ENCODE measurements at regions of chr3 and their contacts with region 1.

Region 1: DNA sequence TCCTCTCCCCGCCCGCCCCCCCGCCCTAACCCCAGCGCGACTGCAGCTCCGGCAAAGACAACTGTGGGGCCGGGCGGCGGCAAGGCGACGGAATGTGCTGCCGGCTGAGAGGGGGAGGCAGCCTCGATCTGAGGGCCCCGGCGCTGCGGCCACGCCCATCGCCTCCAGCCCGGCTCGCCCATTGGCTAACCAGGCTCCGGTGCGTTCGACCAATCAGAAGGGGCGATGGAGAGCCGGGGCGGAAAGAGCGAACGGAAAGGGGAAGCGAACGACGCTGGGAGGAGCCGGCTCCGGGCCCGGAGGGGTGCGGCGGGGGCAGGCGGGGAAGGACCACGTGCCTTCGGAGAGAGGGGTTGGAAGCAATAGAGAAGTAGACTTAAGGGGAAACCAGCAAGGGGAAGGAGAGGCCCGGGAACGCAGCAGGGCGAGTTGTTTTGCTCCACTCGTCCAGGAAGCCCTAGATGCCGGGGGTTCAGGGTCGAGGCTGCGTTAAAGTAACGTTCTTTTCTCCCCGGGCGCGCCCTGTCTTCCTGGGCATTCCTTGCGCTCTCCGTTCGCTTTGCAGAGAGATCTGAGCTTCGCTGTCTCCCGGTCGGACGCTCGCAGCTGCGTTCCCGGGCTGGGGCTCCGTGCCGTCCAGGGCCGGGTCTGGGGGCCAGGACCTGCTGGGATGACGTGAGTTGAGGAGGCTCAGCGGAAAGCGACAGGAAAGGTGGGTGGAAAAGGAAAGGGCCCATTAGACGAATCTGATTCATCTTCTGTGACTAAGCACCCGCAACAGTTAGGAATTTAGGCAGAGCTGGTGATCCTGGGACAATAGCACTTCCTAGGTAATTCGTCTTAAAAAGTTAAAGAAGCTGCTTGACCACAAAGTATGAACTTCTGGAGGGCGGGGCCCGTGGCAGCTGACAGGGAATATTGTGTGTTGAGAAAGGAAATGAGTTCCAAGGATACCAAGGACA is at the start of gene KPNA4:
- DNase-seq: peak; percentile 99
- H3K4me3 Mint-ChIP-seq: peak within 1 kb of the TSS; percentile 100
- H3K27ac Mint-ChIP-seq: peak within 1 kb of the TSS; percentile 100
- H3K4me1 Mint-ChIP-seq: peaks cover 52% of the 10 kb centered on the region
- H3K27me3 Mint-ChIP-seq: no peaks in the 10 kb centered on the region
- total RNA-seq, gene KPNA4: 72.5 and 75.9 TPM in 2 replicates

Region 2: DNA sequence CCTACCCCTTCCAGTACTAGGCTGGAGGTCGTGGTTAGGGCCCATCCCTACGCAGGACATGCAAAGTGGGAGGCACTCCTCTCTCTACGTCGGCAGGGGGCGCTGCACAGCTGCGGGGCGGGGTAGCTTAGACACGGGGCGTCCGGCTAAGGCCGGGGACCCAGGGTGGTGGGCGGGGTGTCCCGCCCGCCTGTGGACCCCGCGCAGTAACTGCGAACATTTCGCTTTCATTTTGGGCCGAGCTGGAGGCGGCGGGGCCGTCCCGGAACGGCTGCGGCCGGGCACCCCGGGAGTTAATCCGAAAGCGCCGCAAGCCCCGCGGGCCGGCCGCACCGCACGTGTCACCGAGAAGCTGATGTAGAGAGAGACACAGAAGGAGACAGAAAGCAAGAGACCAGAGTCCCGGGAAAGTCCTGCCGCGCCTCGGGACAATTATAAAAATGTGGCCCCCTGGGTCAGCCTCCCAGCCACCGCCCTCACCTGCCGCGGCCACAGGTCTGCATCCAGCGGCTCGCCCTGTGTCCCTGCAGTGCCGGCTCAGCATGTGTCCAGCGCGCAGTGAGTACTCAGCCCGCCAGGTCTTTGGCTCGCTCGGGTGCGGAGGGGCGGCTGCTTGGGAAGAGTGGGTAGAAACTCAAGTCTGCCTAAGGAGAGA is 577.0 kb before region 1 on chr3 and contains the start of gene IL12A:
- intact Hi-C with region 1: no loop called
- DNase-seq: peak; percentile 95
- H3K4me3 Mint-ChIP-seq: peak within 1 kb of the TSS; percentile 74
- H3K27ac Mint-ChIP-seq: peak within 1 kb of the TSS; percentile 26
- H3K4me1 Mint-ChIP-seq: peaks cover 18% of the 10 kb centered on the region
- H3K27me3 Mint-ChIP-seq: peaks cover 22% of the 10 kb centered on the region
- total RNA-seq, gene IL12A: 0.21 and 0.59 TPM in 2 replicates

Region 3: GRCh38 chr3:160449636-160450598 is 115.8 kb before region 1 on chr3 and contains the start of gene TRIM59:
- intact Hi-C with region 1: loop called (anchors 1 kb)
- DNase-seq: peak; percentile 99
- H3K4me3 Mint-ChIP-seq: peak within 1 kb of the TSS; percentile 99
- H3K27ac Mint-ChIP-seq: peak within 1 kb of the TSS; percentile 100
- H3K4me1 Mint-ChIP-seq: peaks cover 29% of the 10 kb centered on the region
- H3K27me3 Mint-ChIP-seq: no peaks in the 10 kb centered on the region
- total RNA-seq, gene TRIM59: 31.8 and 35.0 TPM in 2 replicates

Region 4: DNA sequence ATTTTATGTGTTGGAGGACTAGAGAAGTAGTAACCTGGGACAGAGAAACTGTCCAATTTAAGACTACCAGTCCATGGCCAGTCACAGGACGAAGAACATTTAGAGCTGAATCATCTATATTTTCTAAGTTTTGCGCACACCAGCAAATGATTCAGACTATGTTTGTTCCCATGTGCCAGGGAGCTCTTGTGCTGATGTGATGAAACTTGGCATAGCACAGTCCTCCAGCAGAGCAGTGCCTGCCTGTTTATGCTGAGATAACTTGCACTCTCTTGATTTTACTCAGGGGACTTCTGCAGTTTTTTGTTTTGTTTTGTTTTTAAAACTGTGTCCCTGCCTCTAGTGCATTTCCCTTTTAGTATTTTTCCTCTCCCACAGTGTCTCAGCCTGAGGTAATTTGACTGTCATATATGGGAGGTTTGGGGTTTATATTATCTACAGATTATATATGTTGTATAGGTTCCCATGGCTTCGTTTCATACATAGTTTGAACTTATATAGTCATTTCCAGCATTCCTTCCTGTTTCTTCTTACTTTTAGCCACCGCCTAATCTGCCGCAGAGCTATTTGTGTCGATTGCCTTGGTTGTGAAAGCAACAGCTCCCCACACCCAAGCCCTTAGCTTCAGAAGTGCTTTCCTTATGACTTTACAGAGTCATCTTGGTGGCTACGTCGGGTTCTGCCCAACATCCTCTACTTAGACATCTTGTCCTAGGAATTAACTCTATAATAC is 235.8 kb after region 1 on chr3:
- intact Hi-C with region 1: loop called (anchors 1 kb)
- DNase-seq: peak; percentile 90
- H3K4me3 Mint-ChIP-seq: peak overlapping the region; percentile 71
- H3K27ac Mint-ChIP-seq: peak overlapping the region; percentile 84
- H3K4me1 Mint-ChIP-seq: peaks cover 19% of the 10 kb centered on the region
- H3K27me3 Mint-ChIP-seq: peaks cover 4% of the 10 kb centered on the region

Region 5: GRCh38 chr3:161081633-161082032 is 515.9 kb after region 1 on chr3:
- intact Hi-C with region 1: loop called (anchors 5 kb)
- DNase-seq: peak; percentile 62
- H3K4me3 Mint-ChIP-seq: no peak overlapping the region
- H3K27ac Mint-ChIP-seq: no peak overlapping the region
- H3K4me1 Mint-ChIP-seq: peaks cover 32% of the 10 kb centered on the region
- H3K27me3 Mint-ChIP-seq: peaks cover 5% of the 10 kb centered on the region